ENCODE measurements at regions of chr4 and their contacts with region 1.

Region 1: DNA sequence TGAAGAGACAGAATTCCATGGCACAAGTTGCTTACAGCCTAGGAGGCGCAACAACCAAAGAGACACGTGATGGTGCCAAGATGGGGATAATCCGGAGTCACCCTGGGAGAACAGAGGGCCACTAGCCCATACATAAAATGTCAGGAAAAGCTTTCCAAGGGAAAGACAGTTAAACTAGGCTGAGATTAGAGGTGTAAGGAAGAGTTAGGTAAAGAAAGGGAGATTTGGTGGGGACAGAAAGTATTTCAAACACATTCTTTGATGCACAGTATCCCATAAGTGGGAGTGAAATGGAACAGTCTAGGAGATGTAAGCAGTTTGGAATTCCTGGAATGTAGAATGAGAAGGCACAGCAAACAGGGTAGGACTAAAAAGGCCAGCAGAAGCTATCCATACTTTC is 860.9 kb upstream of the LCORL start:
- DNase-seq: peak; percentile 43 to 44
- H3K4me3 ChIP-seq: no peak overlapping the region
- H3K4me3 Mint-ChIP-seq: peak overlapping the region; percentile 6
- H3K27ac Mint-ChIP-seq: peak overlapping the region; percentile 92
- H3K4me1 ChIP-seq: peaks cover 19% of the 10 kb centered on the region
- H3K4me1 Mint-ChIP-seq: peaks cover 15% of the 10 kb centered on the region
- H3K27me3 ChIP-seq: no peaks in the 10 kb centered on the region
- H3K27me3 Mint-ChIP-seq: no peaks in the 10 kb centered on the region
- CTCF ChIP-seq: no peak

Region 2: DNA sequence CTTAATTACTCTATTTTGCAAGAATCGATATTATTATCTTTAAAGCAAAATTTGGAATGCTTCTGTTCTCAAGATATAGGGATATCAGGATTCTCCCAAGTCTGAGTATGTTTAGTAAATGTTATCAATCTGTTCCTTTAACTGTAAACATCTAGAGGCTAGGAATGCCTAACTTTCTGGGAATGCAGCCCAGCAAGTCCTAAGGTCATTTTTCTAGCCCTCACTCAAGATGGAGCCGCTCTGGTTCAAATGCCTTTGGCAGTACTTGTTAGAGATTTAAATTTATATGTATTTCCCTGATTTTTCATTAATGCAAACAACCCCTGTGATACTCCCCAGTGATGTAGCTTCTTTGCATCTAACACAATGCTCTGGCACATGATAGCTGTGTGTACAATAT is 237.1 kb before region 1 on chr4:
- CTCF ChIA-PET with region 1: no interaction called
- POLR2A ChIA-PET with region 1: no interaction called
- intact Hi-C with region 1: no loop called
- DNase-seq: peak; percentile 35 to 47
- H3K4me3 ChIP-seq: no peak overlapping the region
- H3K4me3 Mint-ChIP-seq: no peak overlapping the region
- H3K27ac Mint-ChIP-seq: peak overlapping the region; percentile 68
- H3K4me1 ChIP-seq: peaks cover 27% of the 10 kb centered on the region
- H3K4me1 Mint-ChIP-seq: peaks cover 17% of the 10 kb centered on the region
- H3K27me3 ChIP-seq: no peaks in the 10 kb centered on the region
- H3K27me3 Mint-ChIP-seq: no peaks in the 10 kb centered on the region
- CTCF ChIP-seq: no peak

Region 3: DNA sequence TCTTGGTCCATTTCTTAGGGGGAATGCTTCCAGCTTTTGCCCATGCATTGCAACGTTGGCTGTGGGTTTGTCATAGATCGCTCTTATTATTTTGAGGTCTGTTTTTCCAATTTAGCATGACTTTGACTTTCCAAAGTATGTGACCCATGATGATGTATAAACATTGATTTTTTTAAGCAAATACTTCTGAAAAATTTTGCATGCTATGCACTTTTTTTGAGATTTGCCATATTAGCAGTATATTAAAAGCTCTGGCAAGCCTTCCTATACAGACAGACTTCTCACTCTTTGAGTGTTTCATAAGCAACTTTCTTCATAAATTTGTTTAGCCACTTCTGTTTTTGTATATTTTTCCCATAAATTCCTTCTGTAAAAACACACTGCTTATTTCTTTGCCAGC is 114.5 kb before region 1 on chr4:
- CTCF ChIA-PET with region 1: no interaction called
- POLR2A ChIA-PET with region 1: no interaction called
- intact Hi-C with region 1: no loop called
- DNase-seq: no peak
- H3K4me3 ChIP-seq: no peak overlapping the region
- H3K4me3 Mint-ChIP-seq: no peak overlapping the region
- H3K27ac Mint-ChIP-seq: no peak overlapping the region
- H3K4me1 ChIP-seq: no peaks in the 10 kb centered on the region
- H3K4me1 Mint-ChIP-seq: no peaks in the 10 kb centered on the region
- H3K27me3 ChIP-seq: no peaks in the 10 kb centered on the region
- H3K27me3 Mint-ChIP-seq: no peaks in the 10 kb centered on the region
- CTCF ChIP-seq: no peak

Region 4: GRCh38 chr4:18869166-18869565 is 13.3 kb before region 1 on chr4:
- CTCF ChIA-PET with region 1: no interaction called
- POLR2A ChIA-PET with region 1: no interaction called
- intact Hi-C with region 1: loop called (anchors 1 kb)
- DNase-seq: no peak
- H3K4me3 ChIP-seq: no peak overlapping the region
- H3K4me3 Mint-ChIP-seq: no peak overlapping the region
- H3K27ac Mint-ChIP-seq: no peak overlapping the region
- H3K4me1 ChIP-seq: peaks cover 25% of the 10 kb centered on the region
- H3K4me1 Mint-ChIP-seq: peaks cover 14% of the 10 kb centered on the region
- H3K27me3 ChIP-seq: no peaks in the 10 kb centered on the region
- H3K27me3 Mint-ChIP-seq: no peaks in the 10 kb centered on the region
- CTCF ChIP-seq: no peak

Region 5: GRCh38 chr4:18954538-18954937 is 72.1 kb after region 1 on chr4:
- CTCF ChIA-PET with region 1: no interaction called
- POLR2A ChIA-PET with region 1: no interaction called
- intact Hi-C with region 1: no loop called
- DNase-seq: no peak
- H3K4me3 ChIP-seq: no peak overlapping the region
- H3K4me3 Mint-ChIP-seq: no peak overlapping the region
- H3K27ac Mint-ChIP-seq: no peak overlapping the region
- H3K4me1 ChIP-seq: no peaks in the 10 kb centered on the region
- H3K4me1 Mint-ChIP-seq: peaks cover 14% of the 10 kb centered on the region
- H3K27me3 ChIP-seq: no peaks in the 10 kb centered on the region
- H3K27me3 Mint-ChIP-seq: no peaks in the 10 kb centered on the region
- CTCF ChIP-seq: no peak

Measured in Caco-2 (cell line).